GM23248 (cell line): ENCODE measurements at regions of chr12 and their contacts with region 1.

Region 1: DNA sequence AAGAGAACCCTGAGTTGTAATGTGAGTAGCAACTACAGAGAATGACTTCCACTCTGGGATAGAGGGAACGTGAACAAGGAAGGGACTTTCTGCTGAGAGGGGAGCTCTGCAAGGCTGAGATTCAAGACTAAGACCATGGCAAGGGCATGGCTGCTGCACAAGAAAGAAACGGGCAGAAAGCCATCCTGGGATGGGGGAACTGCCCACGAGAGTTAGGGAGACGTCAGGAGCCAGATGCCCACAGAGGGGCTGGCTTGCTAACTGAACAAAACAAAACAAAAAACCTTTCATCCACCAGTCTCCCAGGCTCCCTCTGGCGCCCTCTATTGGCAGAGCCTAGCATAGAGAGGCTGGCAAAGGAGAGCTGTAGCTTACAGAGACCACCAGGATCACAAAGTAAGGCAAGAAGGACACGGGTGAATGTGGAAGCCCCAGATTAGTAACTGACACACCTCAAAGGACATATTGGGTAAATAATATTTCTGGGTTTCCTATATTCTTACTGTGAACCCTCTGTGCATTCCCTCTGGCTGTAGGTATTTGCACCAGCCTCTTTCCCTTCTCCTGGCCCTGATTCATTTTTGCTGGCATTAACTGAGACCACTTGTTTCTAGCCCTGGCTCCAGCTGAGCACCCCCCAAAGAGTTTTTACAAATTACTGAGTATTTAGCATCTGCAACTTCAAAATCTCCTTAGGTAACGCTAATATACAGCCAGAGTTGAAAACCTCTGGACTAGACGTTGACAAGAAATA is 338.3 kb downstream of the EMP1 start:
- DNase-seq: peak; percentile 66
- H3K4me3 ChIP-seq: peak overlapping the region; percentile 46
- H3K27ac ChIP-seq: no peak overlapping the region
- H3K4me1 ChIP-seq: no peaks in the 10 kb centered on the region
- H3K27me3 ChIP-seq: peaks cover 50% of the 10 kb centered on the region

Region 2: GRCh38 chr12:13044002-13044905 is 490.6 kb before region 1 on chr12 and contains the start of gene FAM234B:
- in situ Hi-C with region 1: loop called (anchors 25 kb)
- DNase-seq: peak; percentile 89
- H3K4me3 ChIP-seq: peak within 1 kb of the TSS; percentile 90
- H3K27ac ChIP-seq: no peak within 1 kb of the TSS
- H3K4me1 ChIP-seq: peaks cover 3% of the 10 kb centered on the region
- H3K27me3 ChIP-seq: no peaks in the 10 kb centered on the region
- total RNA-seq, gene FAM234B: 5.0 and 6.4 TPM in 2 replicates